ENCODE measurements at regions of chr3 and their contacts with region 1.

Region 1: GRCh38 chr3:66276705-66277274 is 56.0 kb downstream of the SLC25A26 start:
- DNase-seq: peak; percentile 42 to 84 (median 64)
- ATAC-seq: peak; percentile 71
- H3K4me3 ChIP-seq: no peak overlapping the region
- H3K4me3 Mint-ChIP-seq: no peak overlapping the region
- H3K27ac ChIP-seq: no peak overlapping the region
- H3K27ac Mint-ChIP-seq: peak overlapping the region; percentile 34
- H3K4me1 ChIP-seq: peaks cover 10% of the 10 kb centered on the region
- H3K4me1 Mint-ChIP-seq: peaks cover 37% of the 10 kb centered on the region
- H3K27me3 ChIP-seq: no peaks in the 10 kb centered on the region
- H3K27me3 Mint-ChIP-seq: no peaks in the 10 kb centered on the region
- CTCF ChIP-seq: peak; percentile 80

Region 2: DNA sequence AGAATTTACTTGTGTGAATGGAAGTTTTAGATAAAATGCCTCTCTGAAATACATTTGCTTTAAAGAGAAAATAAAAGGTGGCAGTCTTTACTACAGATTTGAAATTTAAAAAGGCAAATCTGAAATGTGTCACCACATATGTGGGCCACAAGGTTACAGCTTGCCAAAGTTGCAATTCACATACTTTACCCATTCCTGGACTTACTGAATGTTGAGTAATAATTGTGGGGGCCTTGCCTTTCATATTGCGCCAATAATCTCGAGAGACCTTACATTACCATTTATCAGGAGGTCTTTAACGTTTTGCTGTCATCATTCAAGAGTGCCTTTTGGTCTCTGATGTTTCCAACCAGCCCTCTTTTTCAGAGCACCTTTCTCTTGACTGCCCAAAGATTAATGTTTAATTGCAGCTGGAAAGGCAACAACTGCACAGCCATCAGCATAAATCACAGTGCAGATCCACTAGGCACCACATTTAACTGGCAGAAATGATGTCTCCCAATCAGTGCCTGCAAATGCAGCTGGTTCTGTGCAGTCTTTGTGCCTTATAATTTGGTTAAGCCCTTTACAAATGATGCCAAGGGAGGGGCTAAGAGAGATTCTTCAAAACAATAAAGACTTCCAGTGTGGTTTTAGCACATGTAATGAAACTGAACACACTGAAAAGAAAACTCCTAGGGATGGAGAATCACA is 444.9 kb before region 1 on chr3:
- CTCF ChIA-PET with region 1: no interaction called
- POLR2A ChIA-PET with region 1: no interaction called
- intact Hi-C with region 1: no loop called
- DNase-seq: no peak
- ATAC-seq: no peak
- H3K4me3 ChIP-seq: no peak overlapping the region
- H3K4me3 Mint-ChIP-seq: no peak overlapping the region
- H3K27ac ChIP-seq: no peak overlapping the region
- H3K27ac Mint-ChIP-seq: no peak overlapping the region
- H3K4me1 ChIP-seq: no peaks in the 10 kb centered on the region
- H3K4me1 Mint-ChIP-seq: no peaks in the 10 kb centered on the region
- H3K27me3 ChIP-seq: no peaks in the 10 kb centered on the region
- H3K27me3 Mint-ChIP-seq: no peaks in the 10 kb centered on the region
- CTCF ChIP-seq: no peak

Region 3: DNA sequence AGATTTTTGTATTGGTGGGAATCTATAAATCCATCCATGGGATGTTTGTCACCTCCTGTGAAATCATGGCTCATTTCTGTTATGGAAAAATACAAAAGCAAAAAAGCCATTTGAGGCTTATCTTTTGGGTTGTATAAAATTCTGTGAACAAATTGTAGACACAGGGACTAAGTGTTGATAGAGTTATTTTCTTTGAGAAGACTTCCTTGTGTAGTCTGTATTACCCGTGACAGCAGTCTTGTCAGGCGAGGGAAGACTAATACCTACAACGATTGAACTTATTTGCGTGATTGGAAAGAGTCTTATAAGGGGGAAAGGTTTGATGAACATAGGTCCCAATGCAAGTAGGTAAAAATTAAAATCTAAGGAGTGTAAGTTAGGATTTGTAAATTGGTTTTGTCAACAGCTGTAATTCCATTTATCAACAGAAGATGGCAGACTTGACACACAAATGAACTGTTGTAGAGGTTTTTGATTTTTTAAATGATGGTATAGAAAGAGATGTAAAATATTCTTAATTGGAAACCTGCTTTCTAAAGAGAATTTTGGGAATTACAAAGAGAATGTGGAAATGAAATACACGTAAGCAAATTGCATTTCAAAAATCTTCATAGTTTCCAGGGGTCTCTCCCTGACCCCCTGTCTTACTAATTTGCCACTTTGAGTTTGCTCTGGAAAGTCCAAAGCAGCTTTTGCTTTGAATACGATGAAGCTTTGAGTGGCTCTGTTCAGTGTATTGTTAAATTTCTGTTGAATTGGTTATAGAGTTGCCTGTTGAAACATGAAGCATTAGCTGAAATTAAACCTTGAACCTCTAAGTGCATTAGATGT is 22.8 kb before region 1 on chr3:
- CTCF ChIA-PET with region 1: interaction called, 5 read pairs
- POLR2A ChIA-PET with region 1: no interaction called
- intact Hi-C with region 1: loop called in 1 of 2 experiments (anchors 1 kb)
- DNase-seq: peak in 2 of 9 experiments; percentile 51 to 60
- ATAC-seq: peak; percentile 38
- H3K4me3 ChIP-seq: no peak overlapping the region
- H3K4me3 Mint-ChIP-seq: no peak overlapping the region
- H3K27ac ChIP-seq: no peak overlapping the region
- H3K27ac Mint-ChIP-seq: no peak overlapping the region
- H3K4me1 ChIP-seq: no peaks in the 10 kb centered on the region
- H3K4me1 Mint-ChIP-seq: peaks cover 8% of the 10 kb centered on the region
- H3K27me3 ChIP-seq: no peaks in the 10 kb centered on the region
- H3K27me3 Mint-ChIP-seq: no peaks in the 10 kb centered on the region
- CTCF ChIP-seq: peak; percentile 84

Region 4: GRCh38 chr3:66372681-66373350 is 96.0 kb after region 1 on chr3:
- CTCF ChIA-PET with region 1: interaction called, 41 read pairs
- POLR2A ChIA-PET with region 1: interaction called, 3 read pairs
- intact Hi-C with region 1: loop called (anchors 1 to 2 kb)
- DNase-seq: peak; percentile 30 to 76 (median 55)
- ATAC-seq: peak; percentile 83
- H3K4me3 ChIP-seq: no peak overlapping the region
- H3K4me3 Mint-ChIP-seq: no peak overlapping the region
- H3K27ac ChIP-seq: no peak overlapping the region
- H3K27ac Mint-ChIP-seq: peak overlapping the region; percentile 52
- H3K4me1 ChIP-seq: no peaks in the 10 kb centered on the region
- H3K4me1 Mint-ChIP-seq: peaks cover 5% of the 10 kb centered on the region
- H3K27me3 ChIP-seq: no peaks in the 10 kb centered on the region
- H3K27me3 Mint-ChIP-seq: no peaks in the 10 kb centered on the region
- CTCF ChIP-seq: peak; percentile 38

Region 5: GRCh38 chr3:66394019-66394752 is 117.4 kb after region 1 on chr3:
- CTCF ChIA-PET with region 1: interaction called, 9 read pairs
- POLR2A ChIA-PET with region 1: interaction called, 3 read pairs
- intact Hi-C with region 1: loop called in 1 of 2 experiments (anchors 5 kb)
- DNase-seq: peak; percentile 32 to 84 (median 60)
- ATAC-seq: peak; percentile 93
- H3K4me3 ChIP-seq: peak overlapping the region; percentile 16 to 35
- H3K4me3 Mint-ChIP-seq: peak overlapping the region; percentile 85
- H3K27ac ChIP-seq: peak overlapping the region; percentile 57 to 72
- H3K27ac Mint-ChIP-seq: peak overlapping the region; percentile 95
- H3K4me1 ChIP-seq: peaks cover 24% of the 10 kb centered on the region
- H3K4me1 Mint-ChIP-seq: peaks cover 56% of the 10 kb centered on the region
- H3K27me3 ChIP-seq: no peaks in the 10 kb centered on the region
- H3K27me3 Mint-ChIP-seq: no peaks in the 10 kb centered on the region
- CTCF ChIP-seq: no peak

Region 6: GRCh38 chr3:66428733-66429132 is 151.9 kb after region 1 on chr3:
- CTCF ChIA-PET with region 1: no interaction called
- POLR2A ChIA-PET with region 1: no interaction called
- intact Hi-C with region 1: no loop called
- DNase-seq: no peak
- ATAC-seq: no peak
- H3K4me3 ChIP-seq: no peak overlapping the region
- H3K4me3 Mint-ChIP-seq: no peak overlapping the region
- H3K27ac ChIP-seq: no peak overlapping the region
- H3K27ac Mint-ChIP-seq: no peak overlapping the region
- H3K4me1 ChIP-seq: no peaks in the 10 kb centered on the region
- H3K4me1 Mint-ChIP-seq: peaks cover 19% of the 10 kb centered on the region
- H3K27me3 ChIP-seq: no peaks in the 10 kb centered on the region
- H3K27me3 Mint-ChIP-seq: no peaks in the 10 kb centered on the region
- CTCF ChIP-seq: no peak

Region 7: DNA sequence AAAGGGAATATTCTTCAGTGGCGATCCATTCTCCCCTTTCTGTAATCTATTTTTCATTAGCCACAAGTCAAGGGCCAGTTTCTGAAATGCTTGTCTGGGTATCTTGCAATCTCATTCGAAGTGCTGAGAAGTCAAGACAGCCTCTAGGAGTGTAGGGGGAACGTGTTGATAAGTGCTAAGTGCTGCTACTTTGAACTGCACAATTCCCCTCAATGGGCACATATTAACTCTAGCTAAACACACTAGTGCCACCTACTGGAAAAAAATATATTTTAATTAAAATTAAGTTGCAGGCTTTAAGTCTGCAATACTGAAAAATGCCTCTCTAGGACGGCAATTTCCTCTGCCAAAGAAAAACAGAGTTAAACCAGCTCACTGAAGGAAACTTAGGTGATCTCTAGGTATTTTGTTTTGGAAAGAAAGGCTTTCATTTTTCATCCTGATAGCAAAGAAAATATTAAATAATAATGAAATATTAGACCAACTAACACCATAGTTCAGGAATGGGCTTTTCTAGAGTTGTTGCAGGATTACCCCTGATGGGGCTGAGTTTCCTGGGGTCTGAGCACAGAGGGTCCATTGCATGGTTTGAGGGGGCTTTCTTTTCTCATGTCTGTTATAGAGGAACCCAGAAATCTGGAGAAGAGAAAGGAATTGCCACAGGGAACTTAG is 539.4 kb after region 1 on chr3:
- CTCF ChIA-PET with region 1: interaction called, 11 read pairs
- POLR2A ChIA-PET with region 1: no interaction called
- intact Hi-C with region 1: loop called (anchors 1 kb)
- DNase-seq: peak in 3 of 9 experiments; percentile 6 to 63 (median 53)
- ATAC-seq: peak; percentile 73
- H3K4me3 ChIP-seq: no peak overlapping the region
- H3K4me3 Mint-ChIP-seq: no peak overlapping the region
- H3K27ac ChIP-seq: no peak overlapping the region
- H3K27ac Mint-ChIP-seq: no peak overlapping the region
- H3K4me1 ChIP-seq: no peaks in the 10 kb centered on the region
- H3K4me1 Mint-ChIP-seq: no peaks in the 10 kb centered on the region
- H3K27me3 ChIP-seq: no peaks in the 10 kb centered on the region
- H3K27me3 Mint-ChIP-seq: peaks cover 7% of the 10 kb centered on the region
- CTCF ChIP-seq: peak; percentile 70